ENCODE measurements at regions of chr22 and their contacts with region 1.

Region 1: GRCh38 chr22:27885977-27886842 is 32.8 kb downstream of the PITPNB start:
- DNase-seq: peak in 1 of 6 donors; percentile 48
- ATAC-seq: peak; percentile 61 to 84 (median 80)
- H3K4me3 ChIP-seq: no peak overlapping the region
- H3K27ac ChIP-seq: no peak overlapping the region
- H3K4me1 ChIP-seq: peaks cover 6 to 18% (median 14%) of the 10 kb centered on the region in 3 donors
- H3K27me3 ChIP-seq: no peaks in the 10 kb centered on the region
- CTCF ChIP-seq: peak; percentile 67 to 78 (median 72)

Region 2: GRCh38 chr22:27726697-27727449 is 159.3 kb before region 1 on chr22:
- intact Hi-C with region 1: no loop called
- DNase-seq: no peak
- ATAC-seq: peak in 3 of 4 donors; percentile 55 to 72 (median 62)
- H3K4me3 ChIP-seq: no peak overlapping the region
- H3K27ac ChIP-seq: no peak overlapping the region
- H3K4me1 ChIP-seq: no peaks in the 10 kb centered on the region
- H3K27me3 ChIP-seq: no peaks in the 10 kb centered on the region
- CTCF ChIP-seq: no peak

Region 3: DNA sequence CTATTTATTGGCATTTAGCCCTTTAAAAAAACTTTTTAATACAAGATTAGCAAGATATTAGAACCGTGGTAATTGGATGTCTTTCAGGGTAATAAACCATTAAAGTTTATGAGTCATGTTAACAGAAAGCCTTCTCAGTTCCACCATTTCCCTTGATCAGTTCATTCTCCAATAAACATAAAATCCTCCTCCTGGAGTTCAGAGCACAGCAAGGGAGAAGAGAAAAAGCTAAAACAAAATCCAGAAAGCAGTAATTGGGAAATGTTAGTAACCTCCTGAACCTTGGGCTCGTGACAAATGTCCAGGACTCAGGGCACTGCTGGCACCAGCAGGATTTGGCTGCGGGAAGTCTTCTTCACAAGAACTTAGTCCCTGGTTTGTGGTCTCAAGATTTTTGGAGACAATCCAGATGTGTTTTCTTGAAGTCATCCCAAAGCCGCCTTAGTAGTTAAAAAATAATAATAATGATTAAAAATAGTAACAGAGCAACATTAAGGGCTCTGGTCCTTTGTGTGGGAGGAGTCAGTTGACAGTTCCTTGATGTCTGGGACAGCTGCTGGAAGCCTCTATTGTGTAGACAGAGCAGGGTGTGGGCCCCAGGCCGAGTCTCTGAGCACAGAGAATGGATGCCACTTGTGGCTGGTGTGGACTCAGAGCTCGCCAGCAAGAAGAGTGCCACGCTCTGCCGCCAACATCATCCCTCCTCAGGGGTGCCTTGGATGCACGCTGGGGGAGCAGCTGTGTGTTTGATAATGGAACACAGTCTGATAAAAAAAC is 76.2 kb after region 1 on chr22:
- intact Hi-C with region 1: no loop called
- DNase-seq: no peak
- ATAC-seq: peak in 2 of 4 donors; percentile 32 to 46
- H3K4me3 ChIP-seq: no peak overlapping the region
- H3K27ac ChIP-seq: no peak overlapping the region
- H3K4me1 ChIP-seq: peaks cover 11 to 14% (median 12%) of the 10 kb centered on the region in 3 donors
- H3K27me3 ChIP-seq: no peaks in the 10 kb centered on the region
- CTCF ChIP-seq: no peak

Region 4: DNA sequence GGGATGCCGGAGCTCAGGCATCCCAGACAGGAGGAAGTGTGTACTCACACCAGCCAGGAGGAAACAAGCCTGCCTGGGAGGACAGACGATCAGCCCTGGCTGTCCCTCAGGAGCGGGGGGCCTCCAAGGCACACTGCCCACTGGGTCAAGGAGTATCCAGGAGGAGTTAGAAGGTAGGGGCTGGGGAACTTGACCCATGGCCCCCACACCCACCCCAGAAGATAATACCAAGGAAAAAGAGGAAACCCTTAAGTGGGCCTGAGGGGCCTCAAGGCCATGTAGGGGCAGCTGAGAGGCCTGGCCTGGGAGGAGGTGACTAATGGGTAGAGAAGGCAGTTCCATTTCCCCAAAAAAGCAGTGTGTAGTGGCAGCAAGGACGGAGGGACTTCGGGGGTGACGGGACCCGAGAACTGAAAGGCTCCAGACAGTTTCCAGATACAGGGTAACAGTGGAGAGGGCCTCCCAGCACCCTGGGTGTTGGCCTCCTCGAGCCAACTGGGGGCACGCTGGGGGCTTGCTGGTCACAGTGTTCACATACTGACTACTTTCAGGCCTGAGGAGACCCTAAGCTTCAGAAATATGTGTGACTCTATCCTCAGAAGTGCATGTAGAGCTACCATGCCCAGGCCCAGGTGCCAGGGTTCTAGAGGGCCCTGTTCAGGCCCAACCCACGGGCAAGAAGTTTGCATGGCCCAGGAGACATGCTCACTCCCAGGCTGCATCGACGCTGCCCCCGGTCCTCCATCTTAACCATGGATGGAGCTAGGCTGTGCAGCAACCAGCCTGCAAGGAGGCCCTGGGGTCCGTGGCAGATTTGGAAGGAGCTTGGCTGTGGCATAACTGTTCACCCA is 108.5 kb after region 1 on chr22:
- intact Hi-C with region 1: no loop called
- DNase-seq: peak in 1 of 6 donors; percentile 40
- ATAC-seq: no peak
- H3K4me3 ChIP-seq: no peak overlapping the region
- H3K27ac ChIP-seq: no peak overlapping the region
- H3K4me1 ChIP-seq: no peaks in the 10 kb centered on the region
- H3K27me3 ChIP-seq: no peaks in the 10 kb centered on the region
- CTCF ChIP-seq: no peak

Region 5: GRCh38 chr22:28009272-28009827 is 123.1 kb after region 1 on chr22:
- intact Hi-C with region 1: loop called (anchors 2 to 10 kb)
- DNase-seq: peak; percentile 60 to 89 (median 78)
- ATAC-seq: peak; percentile 88 to 94 (median 93)
- H3K4me3 ChIP-seq: no peak overlapping the region
- H3K27ac ChIP-seq: no peak overlapping the region
- H3K4me1 ChIP-seq: no peaks in the 10 kb centered on the region
- H3K27me3 ChIP-seq: no peaks in the 10 kb centered on the region
- CTCF ChIP-seq: peak; percentile 85 to 94 (median 88)